ENCODE measurements at regions of chr15 and their contacts with region 1.

Region 1: GRCh38 chr15:85689729-85690128 is 105.0 kb downstream of the KLHL25 start:
- DNase-seq: peak; percentile 84
- ATAC-seq: peak; percentile 70
- H3K4me3 Mint-ChIP-seq: peak overlapping the region; percentile 81
- H3K27ac Mint-ChIP-seq: peak overlapping the region; percentile 97
- H3K4me1 Mint-ChIP-seq: peaks cover 70% of the 10 kb centered on the region
- H3K27me3 Mint-ChIP-seq: no peaks in the 10 kb centered on the region
- CTCF ChIP-seq: no peak

Region 2: GRCh38 chr15:85543741-85544155 is 146.0 kb before region 1 on chr15:
- CTCF ChIA-PET with region 1: no interaction called
- POLR2A ChIA-PET with region 1: interaction called, 3 read pairs
- intact Hi-C with region 1: loop called (anchors 5 kb)
- DNase-seq: peak; percentile 75
- ATAC-seq: peak; percentile 35
- H3K4me3 Mint-ChIP-seq: peak overlapping the region; percentile 61
- H3K27ac Mint-ChIP-seq: peak overlapping the region; percentile 74
- H3K4me1 Mint-ChIP-seq: peaks cover 82% of the 10 kb centered on the region
- H3K27me3 Mint-ChIP-seq: no peaks in the 10 kb centered on the region
- CTCF ChIP-seq: no peak

Region 3: GRCh38 chr15:85607842-85608241 is 81.9 kb before region 1 on chr15:
- CTCF ChIA-PET with region 1: no interaction called
- POLR2A ChIA-PET with region 1: no interaction called
- intact Hi-C with region 1: no loop called
- DNase-seq: no peak
- ATAC-seq: no peak
- H3K4me3 Mint-ChIP-seq: no peak overlapping the region
- H3K27ac Mint-ChIP-seq: no peak overlapping the region
- H3K4me1 Mint-ChIP-seq: peaks cover 23% of the 10 kb centered on the region
- H3K27me3 Mint-ChIP-seq: no peaks in the 10 kb centered on the region
- CTCF ChIP-seq: no peak

Region 4: DNA sequence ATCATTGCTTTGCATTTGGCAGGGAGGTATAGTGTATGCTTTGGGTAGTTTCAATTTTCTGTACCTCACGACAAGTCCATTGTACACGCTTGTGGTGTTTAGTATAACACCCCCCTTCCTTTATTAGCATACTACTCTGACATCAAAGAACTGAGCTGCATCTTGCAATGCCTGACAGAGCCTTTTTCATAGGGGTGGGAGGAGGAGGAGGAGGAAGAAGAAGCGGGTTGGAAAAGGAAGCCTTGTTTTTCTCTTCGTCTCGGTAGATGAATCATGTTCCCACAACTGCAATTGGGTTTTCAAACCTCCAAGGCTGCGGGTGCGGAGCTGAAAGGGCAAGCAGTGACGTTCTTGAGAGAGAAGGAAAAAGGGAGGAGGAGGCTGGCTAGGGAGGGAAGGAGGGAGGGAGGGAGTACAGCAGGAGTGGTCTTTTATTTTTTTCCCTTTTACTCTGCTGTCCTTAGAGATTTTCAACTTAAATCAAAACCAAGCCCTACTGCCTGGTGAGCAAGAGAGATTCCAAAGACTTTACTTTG is 70.7 kb before region 1 on chr15:
- CTCF ChIA-PET with region 1: interaction called, 6 read pairs
- POLR2A ChIA-PET with region 1: interaction called, 5 read pairs
- intact Hi-C with region 1: loop called (anchors 2 kb)
- DNase-seq: peak; percentile 76
- ATAC-seq: peak; percentile 94
- H3K4me3 Mint-ChIP-seq: no peak overlapping the region
- H3K27ac Mint-ChIP-seq: no peak overlapping the region
- H3K4me1 Mint-ChIP-seq: peaks cover 25% of the 10 kb centered on the region
- H3K27me3 Mint-ChIP-seq: no peaks in the 10 kb centered on the region
- CTCF ChIP-seq: no peak

Region 5: DNA sequence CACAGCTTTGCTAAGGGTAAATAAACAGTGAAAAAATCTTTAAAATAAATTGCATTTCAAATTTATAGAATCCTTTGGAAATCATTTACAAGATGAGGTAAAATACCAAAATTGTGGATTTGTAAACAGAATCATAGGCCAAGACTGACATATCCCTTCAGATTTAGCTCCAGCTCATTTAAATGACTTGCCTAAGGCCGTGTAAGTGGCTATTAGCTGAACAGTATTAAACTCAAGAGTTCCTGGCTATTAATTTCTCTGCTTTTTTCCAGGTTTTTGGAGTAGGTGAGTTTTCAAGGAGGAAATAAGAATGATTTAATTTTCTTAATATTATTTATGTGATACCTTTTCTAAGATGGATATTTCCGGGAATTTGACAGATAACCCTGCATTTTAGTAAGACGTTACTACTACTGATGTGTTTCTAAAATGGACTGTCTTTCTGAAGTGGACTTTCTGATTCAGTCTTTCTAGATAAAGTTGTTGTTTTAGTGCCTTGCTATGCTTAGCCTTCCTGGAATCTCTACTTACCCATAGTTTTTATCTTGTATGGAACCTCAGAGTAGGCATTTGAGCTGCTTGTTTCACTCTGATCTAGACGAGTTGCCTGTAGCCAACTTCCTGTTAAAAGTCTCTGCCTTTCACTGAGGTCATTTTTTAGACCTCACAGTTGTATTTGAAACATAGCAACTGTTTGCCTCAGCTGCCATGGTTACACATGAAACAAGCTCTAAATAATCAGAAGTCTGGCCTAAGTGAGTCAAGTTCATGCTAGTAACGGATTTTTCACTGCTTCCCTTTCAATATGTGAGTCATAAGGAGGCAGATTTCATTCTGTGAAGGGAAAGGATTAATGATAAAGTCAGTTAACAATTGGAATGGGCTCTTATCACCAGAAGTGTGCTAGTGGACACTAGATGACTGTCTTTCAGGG is 22.0 kb before region 1 on chr15:
- CTCF ChIA-PET with region 1: interaction called, 4 read pairs
- POLR2A ChIA-PET with region 1: interaction called, 6 read pairs
- intact Hi-C with region 1: loop called (anchors 2 kb)
- DNase-seq: peak; percentile 79
- ATAC-seq: peak; percentile 95
- H3K4me3 Mint-ChIP-seq: peak overlapping the region; percentile 36
- H3K27ac Mint-ChIP-seq: peak overlapping the region; percentile 96
- H3K4me1 Mint-ChIP-seq: peaks cover 32% of the 10 kb centered on the region
- H3K27me3 Mint-ChIP-seq: no peaks in the 10 kb centered on the region
- CTCF ChIP-seq: no peak

Region 6: DNA sequence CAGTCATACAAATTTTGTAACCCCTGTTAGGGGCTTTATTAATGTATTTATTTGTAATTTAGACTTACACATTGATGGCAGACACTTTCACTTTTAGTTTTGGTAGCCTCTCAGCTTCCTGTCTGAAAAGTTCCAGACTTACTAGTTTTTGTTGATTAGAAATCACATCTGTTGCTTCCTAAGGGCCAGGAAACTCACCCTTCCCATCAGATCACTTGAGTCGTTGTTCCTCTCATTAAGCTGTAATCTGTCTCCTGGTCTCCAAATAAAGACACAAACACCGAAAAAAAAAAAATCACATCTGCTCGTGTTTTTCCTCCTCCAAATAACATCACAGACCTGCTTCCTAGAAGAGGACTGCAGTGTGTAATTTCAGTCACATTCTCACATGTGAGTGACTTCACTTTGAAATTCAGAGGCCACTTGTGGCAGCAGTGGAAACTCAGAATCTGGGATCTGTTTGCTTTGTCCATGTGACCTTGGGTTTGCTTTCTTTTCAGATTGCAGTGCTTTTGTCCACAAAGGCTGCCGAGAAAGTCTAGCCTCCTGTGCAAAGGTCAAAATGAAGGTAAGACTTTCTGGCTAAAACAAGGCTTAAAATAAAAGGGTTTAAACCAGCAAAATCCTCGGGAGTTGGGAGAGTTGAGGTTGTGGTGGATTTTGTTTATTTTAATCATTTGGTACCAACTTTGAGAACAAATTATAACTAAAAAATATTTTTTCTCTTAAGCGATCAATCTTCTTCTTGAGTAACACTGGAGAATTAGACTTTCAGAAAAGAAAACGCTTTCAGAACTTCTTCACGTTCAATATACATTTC is 18.0 kb after region 1 on chr15:
- CTCF ChIA-PET with region 1: interaction called, 31 read pairs
- POLR2A ChIA-PET with region 1: interaction called, 152 read pairs
- intact Hi-C with region 1: loop called (anchors 1 kb)
- DNase-seq: peak; percentile 56
- ATAC-seq: peak; percentile 10
- H3K4me3 Mint-ChIP-seq: peak overlapping the region; percentile 78
- H3K27ac Mint-ChIP-seq: peak overlapping the region; percentile 97
- H3K4me1 Mint-ChIP-seq: peaks cover 81% of the 10 kb centered on the region
- H3K27me3 Mint-ChIP-seq: no peaks in the 10 kb centered on the region
- CTCF ChIP-seq: no peak

Region 7: GRCh38 chr15:85741021-85741421 is 51.3 kb after region 1 on chr15:
- CTCF ChIA-PET with region 1: no interaction called
- POLR2A ChIA-PET with region 1: no interaction called
- intact Hi-C with region 1: no loop called
- DNase-seq: no peak
- ATAC-seq: no peak
- H3K4me3 Mint-ChIP-seq: no peak overlapping the region
- H3K27ac Mint-ChIP-seq: no peak overlapping the region
- H3K4me1 Mint-ChIP-seq: no peaks in the 10 kb centered on the region
- H3K27me3 Mint-ChIP-seq: no peaks in the 10 kb centered on the region
- CTCF ChIP-seq: no peak

Region 8: DNA sequence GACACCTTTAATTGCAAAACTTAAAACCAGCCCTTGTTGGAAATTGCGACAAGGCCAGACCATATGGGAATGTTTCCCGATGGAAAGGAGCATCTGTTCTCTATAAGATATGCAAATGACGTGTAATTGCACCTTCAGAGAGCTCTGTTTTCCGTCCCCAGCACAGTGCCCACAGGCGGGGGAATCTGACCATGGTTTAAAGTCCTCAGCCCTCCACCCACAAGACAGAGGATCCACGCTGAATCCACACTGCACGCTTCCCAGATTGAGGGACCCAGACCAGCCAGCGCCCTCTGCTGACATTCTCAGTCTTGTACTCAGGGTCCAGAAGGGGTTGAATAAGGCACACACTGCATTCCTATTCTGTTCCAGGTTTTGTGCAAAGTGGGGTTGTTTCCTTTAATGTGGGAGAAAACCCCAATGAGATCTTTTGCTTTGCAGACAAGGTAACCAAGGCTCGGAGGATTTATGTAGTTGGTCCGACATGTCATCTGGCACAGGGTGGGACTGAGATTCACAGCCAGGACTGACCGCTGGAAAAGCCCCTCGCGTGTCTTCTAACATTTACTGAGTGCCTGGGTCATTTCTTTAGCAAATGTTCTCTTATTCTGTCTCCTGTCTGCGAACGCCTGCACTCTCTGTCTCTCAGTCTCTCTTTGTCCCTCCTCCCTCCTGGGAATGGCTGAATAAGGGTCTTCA is 141.8 kb after region 1 on chr15:
- CTCF ChIA-PET with region 1: no interaction called
- POLR2A ChIA-PET with region 1: no interaction called
- intact Hi-C with region 1: no loop called
- DNase-seq: peak; percentile 60
- ATAC-seq: peak; percentile 51
- H3K4me3 Mint-ChIP-seq: no peak overlapping the region
- H3K27ac Mint-ChIP-seq: no peak overlapping the region
- H3K4me1 Mint-ChIP-seq: no peaks in the 10 kb centered on the region
- H3K27me3 Mint-ChIP-seq: no peaks in the 10 kb centered on the region
- CTCF ChIP-seq: peak; percentile 53

Region 9: GRCh38 chr15:85927931-85928537 is 238.3 kb after region 1 on chr15:
- CTCF ChIA-PET with region 1: no interaction called
- POLR2A ChIA-PET with region 1: no interaction called
- intact Hi-C with region 1: no loop called
- DNase-seq: no peak
- ATAC-seq: no peak
- H3K4me3 Mint-ChIP-seq: no peak overlapping the region
- H3K27ac Mint-ChIP-seq: no peak overlapping the region
- H3K4me1 Mint-ChIP-seq: peaks cover 4% of the 10 kb centered on the region
- H3K27me3 Mint-ChIP-seq: peaks cover 6% of the 10 kb centered on the region
- CTCF ChIP-seq: no peak